CD4-positive, alpha-beta memory T cell (primary cell): ENCODE measurements at regions of chr5 and their contacts with region 1.

Region 1: DNA sequence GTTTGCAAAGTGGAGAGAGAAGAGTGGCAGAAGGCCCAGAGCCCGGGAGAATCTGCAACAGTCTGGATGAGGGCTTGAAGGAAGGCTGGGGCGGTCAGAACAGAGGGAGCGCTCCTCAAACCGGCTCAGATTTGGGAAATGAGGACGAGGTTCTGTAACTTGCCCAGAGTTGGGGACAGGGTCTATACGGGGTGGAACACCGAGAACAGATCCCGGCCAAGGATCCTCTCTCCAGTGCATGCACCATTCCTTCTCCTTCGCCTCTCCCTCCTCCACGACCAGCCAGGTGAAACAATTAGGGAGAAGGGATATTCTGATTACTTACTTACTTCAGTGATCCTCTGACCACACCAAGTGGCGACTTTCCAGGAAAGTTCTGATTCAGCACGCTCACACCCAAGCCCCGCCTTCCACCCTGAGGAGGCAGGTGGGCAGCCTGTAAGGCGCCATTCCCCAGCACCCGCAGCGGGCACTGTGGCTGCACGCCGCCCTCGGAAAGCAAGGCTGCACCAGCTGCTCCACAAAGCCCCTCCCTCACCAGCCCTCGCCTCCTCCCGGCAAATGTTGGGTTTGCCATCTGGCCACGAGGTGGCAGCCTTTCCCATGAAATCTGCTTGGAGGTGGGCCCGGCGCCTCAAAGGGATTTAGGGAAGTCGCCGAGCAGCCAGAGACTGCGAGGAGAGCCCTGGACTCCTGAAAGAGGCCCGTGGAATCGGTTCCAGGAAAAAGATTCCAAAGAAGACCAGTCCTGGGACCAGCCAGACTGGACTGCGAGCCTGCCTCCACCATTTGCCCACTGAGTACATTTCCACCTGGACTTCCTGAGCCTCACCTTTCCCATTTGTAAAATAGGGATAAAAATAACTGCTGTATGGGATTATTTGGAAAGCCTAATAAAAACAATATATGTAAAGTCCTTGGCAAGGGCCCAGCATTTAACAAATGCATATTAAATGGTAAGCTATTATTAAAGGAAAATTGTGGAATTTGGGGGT is 22.2 kb upstream of the WWC1 start:
- DNase-seq: peak; percentile 52 to 70 (median 62)
- H3K4me3 ChIP-seq: peak overlapping the region in 1 of 2 donors; percentile 42
- H3K4me3 Mint-ChIP-seq: peak overlapping the region; percentile 53 to 79 (median 64)
- H3K27ac ChIP-seq: no peak overlapping the region
- H3K27ac Mint-ChIP-seq: no peak overlapping the region
- H3K4me1 ChIP-seq: peaks cover 10% of the 10 kb centered on the region
- H3K4me1 Mint-ChIP-seq: peaks cover 7 to 14% (median 11%) of the 10 kb centered on the region in 4 donors
- H3K27me3 ChIP-seq: no peaks in the 10 kb centered on the region
- H3K27me3 Mint-ChIP-seq: peaks cover 2 to 19% of the 10 kb centered on the region in 2 donors

Region 2: GRCh38 chr5:168422431-168422830 is 153.2 kb after region 1 on chr5:
- CTCF ChIA-PET with region 1: interaction called, 14 read pairs
- POLR2A ChIA-PET with region 1: no interaction called
- intact Hi-C with region 1: no loop called
- DNase-seq: no peak
- H3K4me3 ChIP-seq: no peak overlapping the region
- H3K4me3 Mint-ChIP-seq: no peak overlapping the region
- H3K27ac ChIP-seq: no peak overlapping the region
- H3K27ac Mint-ChIP-seq: no peak overlapping the region
- H3K4me1 ChIP-seq: no peaks in the 10 kb centered on the region
- H3K4me1 Mint-ChIP-seq: no peaks in the 10 kb centered on the region
- H3K27me3 ChIP-seq: no peaks in the 10 kb centered on the region
- H3K27me3 Mint-ChIP-seq: no peaks in the 10 kb centered on the region

Region 3: DNA sequence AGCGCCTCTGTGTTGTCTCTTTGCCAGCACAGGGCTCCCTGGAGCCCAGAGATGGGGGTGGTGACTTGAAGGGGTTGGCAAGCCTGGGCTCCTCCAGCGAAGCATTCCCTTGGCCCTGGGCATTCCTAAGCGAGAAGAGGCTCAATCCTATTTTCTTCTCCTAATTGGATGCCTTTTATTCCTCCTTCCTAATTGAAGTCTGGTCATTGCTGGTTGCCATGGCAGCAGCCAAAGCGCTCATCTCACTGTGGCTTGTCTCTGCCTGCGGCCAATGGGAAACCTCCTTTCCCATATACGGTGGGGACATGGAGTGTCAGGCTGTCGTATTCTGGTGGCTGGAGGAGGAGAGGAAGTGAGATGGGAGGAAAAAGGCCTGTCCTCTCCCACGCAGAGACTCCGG is 164.8 kb after region 1 on chr5:
- CTCF ChIA-PET with region 1: interaction called, 6 read pairs
- POLR2A ChIA-PET with region 1: no interaction called
- intact Hi-C with region 1: loop called (anchors 1 kb)
- DNase-seq: no peak
- H3K4me3 ChIP-seq: no peak overlapping the region
- H3K4me3 Mint-ChIP-seq: no peak overlapping the region
- H3K27ac ChIP-seq: no peak overlapping the region
- H3K27ac Mint-ChIP-seq: no peak overlapping the region
- H3K4me1 ChIP-seq: no peaks in the 10 kb centered on the region
- H3K4me1 Mint-ChIP-seq: peaks cover 0 to 6% (median 0%) of the 10 kb centered on the region in 4 donors
- H3K27me3 ChIP-seq: no peaks in the 10 kb centered on the region
- H3K27me3 Mint-ChIP-seq: no peaks in the 10 kb centered on the region

Region 4: DNA sequence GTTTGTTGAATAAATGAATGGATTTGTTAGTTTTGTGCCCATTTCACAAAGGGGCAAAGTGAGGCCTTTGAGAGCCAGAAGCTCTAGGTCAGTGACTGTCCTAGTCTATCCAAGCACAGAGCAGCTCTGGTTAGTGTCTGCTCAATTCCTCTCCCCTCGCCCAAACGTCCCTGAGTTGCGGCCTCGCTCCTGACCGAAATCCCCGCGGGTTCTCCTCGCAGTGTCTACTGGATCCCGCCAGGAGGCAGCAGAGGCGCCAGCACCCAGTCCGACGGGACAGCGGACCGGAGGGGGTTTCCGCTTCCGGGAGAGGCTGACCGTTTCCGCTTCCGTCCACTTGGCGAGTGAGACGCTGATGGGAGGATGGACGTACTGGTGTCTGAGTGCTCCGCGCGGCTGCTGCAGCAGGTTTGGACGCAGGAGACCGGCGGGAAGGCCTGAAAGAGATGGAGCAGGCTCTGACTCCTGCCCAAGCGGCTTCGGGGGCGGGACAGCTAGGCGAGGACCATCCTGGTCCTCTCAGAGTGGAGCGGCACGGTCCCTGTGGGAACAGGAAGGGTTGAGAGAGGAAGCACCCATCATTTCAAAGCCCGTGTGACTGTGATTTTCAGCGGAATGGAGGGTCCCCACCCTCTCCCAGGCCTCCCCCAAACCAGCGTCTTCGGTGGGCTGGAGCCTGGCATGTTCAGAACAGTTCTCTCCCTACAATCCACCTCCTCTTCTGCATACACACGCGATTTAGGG is 217.1 kb after region 1 on chr5 and contains the start of gene RARS1:
- CTCF ChIA-PET with region 1: interaction called, 10 read pairs
- POLR2A ChIA-PET with region 1: no interaction called
- intact Hi-C with region 1: loop called (anchors 1 kb)
- DNase-seq: peak; percentile 78 to 90 (median 81)
- H3K4me3 ChIP-seq: peak within 1 kb of the TSS; percentile 89 to 96
- H3K4me3 Mint-ChIP-seq: peak within 1 kb of the TSS; percentile 98 to 100 (median 99)
- H3K27ac ChIP-seq: peak within 1 kb of the TSS; percentile 71
- H3K27ac Mint-ChIP-seq: peak within 1 kb of the TSS; percentile 91 to 99 (median 97)
- H3K4me1 ChIP-seq: peaks cover 13% of the 10 kb centered on the region
- H3K4me1 Mint-ChIP-seq: peaks cover 23 to 50% (median 36%) of the 10 kb centered on the region in 4 donors
- H3K27me3 ChIP-seq: no peaks in the 10 kb centered on the region
- H3K27me3 Mint-ChIP-seq: peaks cover 0 to 5% of the 10 kb centered on the region in 2 donors
- total RNA-seq, gene RARS1: 82.5 to 82.8 TPM

Region 5: GRCh38 chr5:168679515-168679920 is 410.3 kb after region 1 on chr5:
- CTCF ChIA-PET with region 1: interaction called, 3 read pairs
- POLR2A ChIA-PET with region 1: no interaction called
- intact Hi-C with region 1: loop called (anchors 1 kb)
- DNase-seq: peak in 4 of 5 donors; percentile 25 to 36 (median 32)
- H3K4me3 ChIP-seq: no peak overlapping the region
- H3K4me3 Mint-ChIP-seq: no peak overlapping the region
- H3K27ac ChIP-seq: no peak overlapping the region
- H3K27ac Mint-ChIP-seq: no peak overlapping the region
- H3K4me1 ChIP-seq: peaks cover 8% of the 10 kb centered on the region
- H3K4me1 Mint-ChIP-seq: peaks cover 3 to 10% (median 6%) of the 10 kb centered on the region in 4 donors
- H3K27me3 ChIP-seq: no peaks in the 10 kb centered on the region
- H3K27me3 Mint-ChIP-seq: peaks cover 0 to 2% of the 10 kb centered on the region in 2 donors